Colonic mucosa (tissue), 4 donors: ENCODE measurements at regions of chr17 and their contacts with region 1.

Region 1: GRCh38 chr17:2383628-2384167 is 17.2 kb downstream of the MNT start:
- DNase-seq: no peak
- H3K4me3 ChIP-seq: no peak overlapping the region
- H3K27ac ChIP-seq: no peak overlapping the region
- H3K4me1 ChIP-seq: no peaks in the 10 kb centered on the region
- H3K27me3 ChIP-seq: no peaks in the 10 kb centered on the region
- CTCF ChIP-seq: no peak

Region 2: DNA sequence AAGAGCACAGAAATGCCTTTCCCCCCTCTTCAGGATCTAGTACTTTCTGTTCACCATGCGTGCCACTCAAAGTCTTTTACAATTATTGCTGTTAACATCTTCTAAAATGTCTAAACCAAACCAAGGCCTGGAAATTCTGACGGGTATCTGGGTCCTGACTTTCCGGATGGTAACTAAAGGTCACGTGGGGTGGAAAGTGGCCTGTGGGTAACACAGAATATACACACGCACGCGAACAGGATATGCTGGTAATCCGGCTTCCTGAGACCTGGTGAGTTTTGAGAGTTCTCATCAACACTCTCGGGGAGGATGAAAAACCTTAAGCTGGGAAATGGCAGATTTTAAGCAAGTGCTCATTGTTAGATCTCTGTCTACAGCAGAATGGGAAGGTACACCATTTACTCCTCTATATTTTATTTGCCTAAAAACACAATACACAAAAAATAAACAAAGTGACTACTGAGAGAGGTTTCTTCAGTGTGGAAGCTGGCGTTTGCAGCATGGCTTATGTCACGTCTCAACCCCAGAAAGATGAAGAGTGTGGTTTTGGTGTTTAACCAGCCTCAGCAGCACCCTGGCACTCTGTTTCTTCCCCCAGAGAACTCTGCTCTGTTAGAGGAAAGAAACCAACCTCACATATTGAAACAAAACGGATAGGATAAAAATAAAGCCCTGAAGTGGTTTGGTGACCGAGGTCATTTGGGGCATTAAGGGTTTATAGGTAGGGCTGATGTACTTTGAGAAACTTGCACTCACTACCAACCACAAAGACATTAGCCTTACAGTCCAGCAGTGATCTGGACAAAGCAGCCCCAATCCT is 117.4 kb before region 1 on chr17:
- intact Hi-C with region 1: no loop called
- DNase-seq: peak; percentile 39
- H3K4me3 ChIP-seq: no peak overlapping the region
- H3K27ac ChIP-seq: peak overlapping the region; percentile 43
- H3K4me1 ChIP-seq: peaks cover 5% of the 10 kb centered on the region
- H3K27me3 ChIP-seq: no peaks in the 10 kb centered on the region
- CTCF ChIP-seq: no peak

Region 3: DNA sequence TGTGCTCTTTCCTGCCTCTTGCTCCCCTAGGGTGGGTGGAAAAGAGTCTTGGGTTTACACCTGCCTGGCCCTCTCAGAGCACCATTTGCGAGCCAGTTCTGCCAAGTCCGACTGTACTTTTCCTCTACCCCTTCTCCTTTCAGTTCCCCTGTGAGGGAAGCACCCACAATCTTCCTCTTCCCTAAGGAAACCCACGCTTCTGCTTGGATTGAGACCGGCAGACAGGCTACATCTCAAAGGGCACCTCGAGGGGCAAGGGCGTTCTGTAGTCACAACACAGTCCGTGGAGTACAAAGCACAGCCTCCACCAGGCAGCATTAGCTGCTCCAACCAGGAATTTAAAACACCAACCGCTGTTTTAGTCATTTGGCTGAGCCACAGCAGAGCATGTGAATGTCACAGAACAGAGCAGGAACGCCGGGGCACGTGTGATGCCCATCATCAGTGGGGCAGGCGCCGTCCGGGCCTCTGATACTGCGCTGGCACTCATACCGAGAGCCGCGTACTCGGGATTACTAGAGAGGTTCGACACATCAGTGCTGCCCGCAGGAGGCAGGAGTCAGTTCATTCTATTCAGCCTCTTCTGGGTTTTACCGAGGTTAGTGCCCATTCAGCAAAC is 30.9 kb after region 1 on chr17:
- intact Hi-C with region 1: loop called (anchors 2 kb)
- DNase-seq: no peak
- H3K4me3 ChIP-seq: no peak overlapping the region
- H3K27ac ChIP-seq: no peak overlapping the region
- H3K4me1 ChIP-seq: no peaks in the 10 kb centered on the region
- H3K27me3 ChIP-seq: no peaks in the 10 kb centered on the region
- CTCF ChIP-seq: no peak